ENCODE measurements at regions of chr22 and their contacts with region 1.

Region 1: DNA sequence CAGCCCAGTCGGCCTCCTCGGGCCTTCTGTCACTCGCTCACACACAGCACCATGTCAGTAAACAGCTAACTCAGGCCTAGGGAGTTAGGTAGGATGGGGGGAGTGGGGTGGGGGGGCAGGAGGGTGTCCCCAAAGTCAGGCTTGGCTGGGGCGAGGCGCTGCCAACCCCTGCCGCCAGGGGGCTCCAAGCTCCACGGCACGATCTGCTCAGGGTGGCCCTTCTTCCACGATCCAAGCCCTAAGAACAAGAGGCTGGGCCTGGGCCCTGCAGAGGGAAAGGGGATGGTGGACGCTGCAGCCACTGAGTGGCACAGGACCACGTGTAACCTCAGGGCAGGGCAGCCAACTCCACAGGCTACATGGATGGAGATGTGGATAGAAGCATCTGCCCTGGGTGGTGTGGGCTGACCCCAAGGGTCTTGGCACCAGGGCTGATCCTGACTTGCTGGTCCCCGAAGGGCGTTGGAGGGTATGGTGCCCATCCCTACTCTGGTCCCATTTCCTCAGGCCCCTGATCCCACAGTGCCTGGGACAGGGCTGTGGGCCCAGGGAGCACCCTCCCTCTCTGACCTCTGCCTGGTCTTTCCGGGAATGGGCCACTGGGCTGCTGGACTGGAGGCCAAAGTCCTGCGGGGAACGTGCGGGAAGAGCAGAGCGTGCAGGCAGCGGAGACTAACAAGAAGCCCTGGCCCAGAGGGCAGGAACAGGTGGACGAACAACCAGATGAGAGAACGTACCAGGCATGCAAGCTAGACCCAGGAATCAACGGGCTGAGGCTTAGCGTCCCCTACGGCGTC is 29.1 kb upstream of the TXNRD2 start:
- DNase-seq: no peak
- H3K4me3 ChIP-seq: no peak overlapping the region
- CTCF ChIP-seq: peak; percentile 93

Region 2: GRCh38 chr22:19959043-19959586 is 11.6 kb before region 1 on chr22:
- CTCF ChIA-PET with region 1: interaction called, 11 read pairs
- POLR2A ChIA-PET with region 1: no interaction called
- DNase-seq: no peak
- H3K4me3 ChIP-seq: peak overlapping the region; percentile 23; the same call in 1 of the 2 replicates
- CTCF ChIP-seq: no peak

Region 3: DNA sequence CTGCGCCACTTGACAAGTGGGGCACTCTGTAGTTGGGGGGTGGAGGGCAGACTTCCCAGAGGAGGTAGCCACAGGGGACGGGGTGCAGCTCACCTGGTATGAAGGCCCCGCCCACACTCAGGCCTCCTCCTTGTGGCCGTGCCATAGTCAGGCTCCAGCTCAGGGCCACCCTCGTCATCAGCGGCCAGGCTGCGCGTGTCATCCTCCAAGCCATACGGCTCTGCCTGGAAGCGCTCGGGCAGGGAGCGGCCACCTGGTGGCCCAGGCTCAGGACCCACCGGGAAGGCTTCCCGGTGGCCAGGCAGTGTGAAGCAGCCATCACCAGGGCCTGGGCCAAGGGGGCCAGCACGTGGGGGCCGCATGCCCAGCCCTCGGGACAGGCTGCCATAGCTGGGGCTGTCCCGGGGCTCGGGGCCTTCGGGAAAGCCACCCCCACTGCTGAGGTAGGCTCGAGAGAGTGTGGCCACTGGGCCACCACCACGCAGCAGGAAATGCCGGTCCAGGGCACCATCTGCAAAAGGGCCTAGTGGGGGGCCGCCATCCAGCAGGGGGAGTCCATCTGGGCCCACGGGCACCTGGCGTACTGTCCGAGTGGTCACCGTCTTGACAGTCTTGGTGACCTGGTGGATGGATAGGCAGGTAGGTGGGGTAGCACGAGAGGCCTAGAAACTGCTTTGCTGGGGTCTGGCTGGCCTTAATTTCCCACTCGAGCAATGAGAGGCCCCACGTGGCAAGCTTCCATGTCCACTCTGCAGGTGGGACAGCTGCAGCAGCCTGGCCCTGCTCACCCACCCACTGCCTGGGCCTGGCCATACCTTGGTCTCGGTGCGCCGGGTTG is 10.7 kb after region 1 on chr22:
- CTCF ChIA-PET with region 1: interaction called, 28 read pairs
- POLR2A ChIA-PET with region 1: interaction called, 4 read pairs
- DNase-seq: no peak
- H3K4me3 ChIP-seq: no peak overlapping the region
- CTCF ChIP-seq: no peak

Region 4: DNA sequence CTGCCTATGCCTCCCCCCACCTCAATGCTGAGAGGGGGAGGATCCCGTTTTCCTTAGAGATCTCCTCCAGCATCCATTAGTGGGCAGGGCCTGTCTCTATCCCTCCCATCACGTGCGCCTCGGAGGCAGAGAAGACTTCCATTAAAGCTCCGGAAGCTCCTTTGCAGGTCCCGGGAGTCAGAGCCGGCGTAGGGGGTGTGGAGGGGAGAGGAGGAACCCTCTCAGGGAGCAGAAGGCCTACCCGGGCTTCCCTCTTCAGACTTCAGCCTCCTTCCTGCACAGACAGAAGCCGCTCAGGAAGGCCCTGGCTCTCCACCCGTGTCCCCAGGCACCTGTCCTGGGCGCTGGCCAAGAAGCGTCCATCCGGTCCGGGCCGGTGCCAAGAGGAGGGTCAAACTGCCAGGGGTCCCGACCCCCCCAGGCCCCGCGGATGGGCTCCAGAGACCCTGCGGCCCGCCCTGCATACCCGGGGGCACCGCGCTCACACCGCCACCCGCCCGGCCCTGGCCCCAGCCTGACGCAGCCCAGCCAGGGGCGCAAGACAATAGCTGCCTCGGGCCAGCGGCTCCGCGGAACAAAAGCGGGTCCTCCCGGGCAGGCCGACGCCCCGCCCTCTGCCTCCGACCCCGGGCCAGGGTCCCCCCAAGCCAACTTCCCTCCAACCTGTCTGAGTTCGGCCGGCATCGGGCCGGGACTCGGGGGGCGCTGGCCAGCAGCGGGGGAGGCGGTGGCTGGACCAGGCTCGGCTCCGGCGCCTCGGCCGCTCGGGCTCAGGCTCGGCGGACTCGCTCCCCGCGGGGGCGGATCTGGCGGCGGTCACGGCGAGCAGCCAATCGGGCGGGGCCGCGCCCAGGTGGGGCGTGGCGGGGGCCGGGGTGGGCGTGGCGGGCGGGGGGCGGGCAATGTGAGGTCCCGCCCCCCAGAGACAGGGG is 16.0 kb after region 1 on chr22:
- CTCF ChIA-PET with region 1: interaction called, 28 read pairs
- POLR2A ChIA-PET with region 1: interaction called, 4 read pairs
- DNase-seq: no peak
- H3K4me3 ChIP-seq: peak overlapping the region; percentile 64
- CTCF ChIP-seq: no peak

Region 5: DNA sequence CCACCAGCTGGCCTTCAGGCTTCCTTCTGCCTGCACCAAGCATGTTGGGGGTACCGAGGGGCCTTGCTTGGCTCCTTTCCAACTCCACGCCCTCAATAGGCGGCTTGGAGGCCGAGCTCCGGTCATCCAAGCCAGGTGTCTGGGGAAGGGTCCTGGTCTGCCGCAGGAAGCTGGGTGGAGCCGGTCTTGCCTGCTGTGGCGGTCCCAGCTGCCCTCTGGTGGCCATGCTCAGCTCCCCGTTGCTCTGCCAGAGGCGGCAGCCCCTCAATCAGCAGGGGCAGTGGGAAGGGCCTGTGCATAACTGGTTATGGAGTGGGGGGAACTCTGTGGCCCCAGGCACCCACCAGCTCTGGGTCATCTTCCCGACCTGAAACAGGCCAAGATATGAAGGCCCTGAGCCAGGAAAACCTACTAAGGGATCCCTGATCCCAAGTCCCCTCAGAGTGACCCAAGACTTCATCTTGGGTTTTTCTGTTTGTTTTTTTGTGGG is 42.8 kb after region 1 on chr22:
- CTCF ChIA-PET with region 1: interaction called, 172 read pairs
- POLR2A ChIA-PET with region 1: interaction called, 8 read pairs
- DNase-seq: no peak
- H3K4me3 ChIP-seq: no peak overlapping the region
- CTCF ChIP-seq: peak; percentile 90

Region 6: DNA sequence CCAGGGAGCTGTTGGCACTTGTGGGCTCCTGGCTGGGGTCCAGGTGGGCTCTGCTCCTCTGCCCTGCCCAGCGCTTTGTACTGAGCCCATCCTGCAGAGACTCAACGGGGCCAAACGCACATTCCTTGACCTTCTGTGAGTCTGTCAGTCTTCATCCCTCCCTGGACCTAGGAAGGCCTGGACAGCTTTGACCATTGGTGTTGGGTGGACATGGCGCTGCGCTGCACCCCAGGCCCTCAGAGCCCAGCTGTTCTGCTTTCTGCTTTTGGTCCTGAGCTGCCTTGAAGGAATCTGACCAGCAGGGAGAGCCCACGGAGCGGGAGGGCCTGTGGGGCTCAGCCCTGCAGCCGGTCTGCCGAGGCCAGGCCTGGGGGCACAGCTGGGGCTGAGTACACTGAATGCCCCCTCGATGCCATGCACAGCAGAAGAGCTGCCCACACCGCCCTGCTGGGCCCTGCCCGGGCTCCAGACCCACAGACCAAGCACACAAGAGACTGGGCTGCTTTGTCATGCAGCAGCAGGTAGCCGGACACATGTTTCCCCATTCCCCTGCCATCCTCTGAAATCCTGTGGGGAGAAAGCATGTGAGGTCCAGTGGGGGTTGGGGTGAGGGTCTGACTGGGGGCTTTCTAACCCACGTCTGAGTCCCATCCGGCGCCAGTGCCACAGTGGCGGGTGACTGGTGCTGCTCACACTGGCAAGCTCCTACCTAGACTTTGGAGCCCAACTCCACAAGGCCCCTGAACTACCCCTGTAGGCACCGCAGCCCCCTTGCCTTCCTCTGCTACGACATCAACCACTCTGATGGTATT is 204.3 kb after region 1 on chr22:
- CTCF ChIA-PET with region 1: no interaction called
- POLR2A ChIA-PET with region 1: no interaction called
- DNase-seq: no peak
- H3K4me3 ChIP-seq: no peak overlapping the region
- CTCF ChIP-seq: peak; percentile 41

Measured in AG04449 (cell line).